ENCODE measurements at regions of chr17 and their contacts with region 1.

Region 1: GRCh38 chr17:72556944-72557826 is 436.4 kb downstream of the SOX9 start:
- DNase-seq: peak; percentile 91
- H3K4me3 ChIP-seq: no peak overlapping the region; a peak in 1 of 4 replicates
- H3K27ac ChIP-seq: no peak overlapping the region
- H3K4me1 ChIP-seq: no peaks in the 10 kb centered on the region
- H3K27me3 ChIP-seq: no peaks in the 10 kb centered on the region
- CTCF ChIP-seq: peak; percentile 98
- EP300 ChIP-seq: no peak
- RAD21 ChIP-seq: peak; percentile 93

Region 2: GRCh38 chr17:72539981-72540897 is 16.9 kb before region 1 on chr17:
- CTCF ChIA-PET with region 1: interaction called, 26 read pairs
- POLR2A ChIA-PET with region 1: no interaction called
- DNase-seq: peak; percentile 99
- H3K4me3 ChIP-seq: no peak overlapping the region
- H3K27ac ChIP-seq: peak overlapping the region; percentile 31 to 54
- H3K4me1 ChIP-seq: peaks cover 9 to 14% of the 10 kb centered on the region in 2 experiments
- H3K27me3 ChIP-seq: no peaks in the 10 kb centered on the region
- CTCF ChIP-seq: peak; percentile 82
- EP300 ChIP-seq: peak; percentile 14 to 16; a peak in 1 of 4 replicates
- RAD21 ChIP-seq: peak; percentile 93

Region 3: DNA sequence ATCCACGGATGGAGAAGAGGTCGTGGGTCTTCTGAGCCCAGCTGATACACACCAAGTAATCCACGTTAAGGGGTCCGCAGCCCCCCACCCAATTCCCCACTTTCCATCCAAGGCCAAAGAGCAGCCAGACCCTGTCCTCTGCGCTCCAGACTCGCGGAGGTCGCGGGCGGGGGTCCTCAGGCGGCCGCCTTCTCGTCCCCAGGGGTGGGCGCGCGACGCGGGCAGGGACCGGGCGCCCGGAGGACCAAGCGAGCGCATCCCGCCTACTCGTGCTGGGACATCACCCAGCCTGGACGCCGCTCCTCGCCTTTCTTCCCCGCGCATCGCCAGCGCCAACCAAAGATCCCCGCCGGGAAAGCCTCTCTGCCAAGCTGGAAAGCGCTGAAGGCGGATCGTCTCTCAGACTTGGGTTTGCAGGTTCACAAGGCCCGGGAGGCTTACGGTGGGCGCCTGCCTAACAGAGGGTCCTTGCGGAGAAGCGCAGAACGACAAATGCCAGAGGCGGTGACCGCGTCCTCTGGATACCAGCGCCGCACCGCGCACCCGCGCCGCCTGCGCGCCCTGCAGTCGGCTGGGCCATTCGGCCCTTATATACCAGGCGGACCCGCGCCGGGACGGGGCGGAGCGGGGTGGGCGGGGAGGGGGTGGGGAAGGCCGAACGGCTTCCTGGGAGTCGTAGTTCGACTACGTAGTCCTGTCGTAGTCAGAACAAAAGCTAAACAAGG is 35.2 kb after region 1 on chr17:
- CTCF ChIA-PET with region 1: interaction called, 39 read pairs
- POLR2A ChIA-PET with region 1: interaction called, 3 read pairs
- DNase-seq: peak; percentile 99
- H3K4me3 ChIP-seq: peak overlapping the region; percentile 67 to 85
- H3K27ac ChIP-seq: peak overlapping the region; percentile 66; a peak in 2 of 4 replicates
- H3K4me1 ChIP-seq: peaks cover 4 to 14% of the 10 kb centered on the region in 2 experiments; a peak in 1 of 4 replicates
- H3K27me3 ChIP-seq: no peaks in the 10 kb centered on the region
- CTCF ChIP-seq: no peak
- EP300 ChIP-seq: no peak
- RAD21 ChIP-seq: 0 out of 2 replicates have a peak, but pooled peaks have one; percentile 14

Region 4: DNA sequence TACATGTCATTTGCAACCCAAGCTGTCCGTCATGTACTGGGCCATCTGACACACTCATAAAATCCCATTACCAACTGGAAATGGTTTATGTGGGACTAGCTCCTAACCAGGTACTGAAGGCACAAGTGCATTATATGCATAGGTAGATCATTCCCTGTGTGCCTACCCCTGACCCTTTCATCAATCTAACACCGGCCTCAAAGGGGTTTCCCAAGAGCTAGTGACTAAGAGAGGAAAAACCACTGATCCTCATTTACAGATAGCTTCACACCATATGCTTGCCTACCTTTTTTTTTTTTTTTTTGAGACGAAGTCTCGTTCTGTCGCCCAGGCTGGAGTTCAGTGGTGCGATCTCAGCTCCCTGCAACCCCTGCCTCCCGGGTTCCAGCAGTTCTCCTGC is 85.5 kb after region 1 on chr17:
- CTCF ChIA-PET with region 1: interaction called, 10 read pairs
- POLR2A ChIA-PET with region 1: no interaction called
- DNase-seq: no peak
- H3K4me3 ChIP-seq: no peak overlapping the region
- H3K27ac ChIP-seq: no peak overlapping the region
- H3K4me1 ChIP-seq: peaks cover 0 to 10% of the 10 kb centered on the region in 2 experiments; a peak in 2 of 4 replicates
- H3K27me3 ChIP-seq: no peaks in the 10 kb centered on the region
- CTCF ChIP-seq: no peak
- EP300 ChIP-seq: no peak
- RAD21 ChIP-seq: no peak

Region 5: GRCh38 chr17:72699545-72699944 is 142.4 kb after region 1 on chr17:
- CTCF ChIA-PET with region 1: interaction called, 32 read pairs
- POLR2A ChIA-PET with region 1: no interaction called
- DNase-seq: no peak
- H3K4me3 ChIP-seq: no peak overlapping the region
- H3K27ac ChIP-seq: peak overlapping the region in 1 of 2 experiments; percentile 60; a peak in 2 of 4 replicates
- H3K4me1 ChIP-seq: peaks cover 19 to 29% of the 10 kb centered on the region in 2 experiments
- H3K27me3 ChIP-seq: no peaks in the 10 kb centered on the region
- CTCF ChIP-seq: no peak
- EP300 ChIP-seq: no peak
- RAD21 ChIP-seq: no peak

Region 6: DNA sequence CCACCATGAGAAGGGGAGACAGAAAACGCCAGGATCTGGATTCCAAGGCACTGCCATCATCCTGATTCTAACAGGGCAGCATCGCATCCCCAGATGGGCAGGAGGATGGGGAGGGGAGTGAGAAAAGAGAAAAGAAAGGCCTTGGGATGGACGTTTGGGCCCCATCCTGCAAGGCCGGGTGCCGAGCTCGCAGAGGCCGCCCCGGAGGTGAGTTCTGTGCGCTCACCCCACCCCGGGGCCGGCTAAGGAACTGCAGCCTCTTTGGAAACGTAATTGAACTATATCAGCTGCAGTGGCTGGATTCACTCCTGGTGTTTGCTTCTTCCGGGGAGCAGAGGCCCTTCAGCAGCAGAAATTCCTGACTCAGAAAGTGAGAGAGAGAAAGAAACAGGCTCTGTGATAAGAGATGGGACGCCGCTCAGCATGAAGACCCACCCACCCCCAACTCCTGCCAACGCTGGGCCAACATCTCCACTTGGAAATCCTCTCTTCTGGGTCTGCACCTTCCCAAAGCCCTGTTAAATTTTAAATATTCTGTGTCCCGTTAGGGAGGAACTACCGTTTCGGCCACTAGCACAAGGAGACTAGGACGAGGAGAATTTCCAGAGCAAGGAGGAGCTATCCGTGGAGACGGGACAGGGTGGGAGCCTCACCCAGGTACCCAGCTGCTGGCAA is 599.1 kb after region 1 on chr17:
- CTCF ChIA-PET with region 1: interaction called, 15 read pairs
- POLR2A ChIA-PET with region 1: no interaction called
- DNase-seq: peak; percentile 92
- H3K4me3 ChIP-seq: peak overlapping the region in 1 of 2 experiments; percentile 31; a peak in 2 of 4 replicates
- H3K27ac ChIP-seq: peak overlapping the region in 1 of 2 experiments; percentile 45; a peak in 1 of 4 replicates
- H3K4me1 ChIP-seq: peaks cover 6 to 22% of the 10 kb centered on the region in 2 experiments; a peak in 1 of 4 replicates
- H3K27me3 ChIP-seq: no peaks in the 10 kb centered on the region
- CTCF ChIP-seq: peak; percentile 89
- EP300 ChIP-seq: 0 out of 4 replicates have a peak, but pooled peaks have one; percentile 9 to 24
- RAD21 ChIP-seq: peak; percentile 90

Region 7: DNA sequence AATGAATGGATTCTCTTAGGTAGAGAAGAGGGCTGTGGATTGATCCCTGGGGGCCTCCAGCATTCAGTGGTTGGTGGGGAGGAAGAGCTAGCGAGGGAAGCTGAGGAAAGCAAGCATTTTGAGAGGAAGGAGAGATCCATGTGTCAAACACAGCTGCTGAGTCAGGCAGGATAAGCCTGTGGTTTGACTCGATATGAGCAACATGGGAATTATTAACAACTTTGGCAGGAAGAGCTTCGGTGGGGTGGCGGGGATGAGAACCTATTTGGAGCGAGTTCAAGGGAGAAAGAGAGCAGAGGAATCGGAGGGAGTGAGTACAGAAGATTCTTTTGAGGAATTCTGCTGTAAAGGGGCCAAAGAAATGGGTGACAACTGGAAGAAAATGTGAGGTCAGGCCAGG is 814.1 kb after region 1 on chr17:
- CTCF ChIA-PET with region 1: interaction called, 11 read pairs
- POLR2A ChIA-PET with region 1: no interaction called
- DNase-seq: no peak
- H3K4me3 ChIP-seq: no peak overlapping the region
- H3K27ac ChIP-seq: no peak overlapping the region
- H3K4me1 ChIP-seq: peaks cover 6 to 8% of the 10 kb centered on the region in 2 experiments; a peak in 2 of 4 replicates
- H3K27me3 ChIP-seq: 0 out of 2 replicates have a peak, but pooled peaks cover 14% of the 10 kb centered on the region
- CTCF ChIP-seq: no peak
- EP300 ChIP-seq: no peak
- RAD21 ChIP-seq: no peak